ENCODE measurements at regions of chr11 and their contacts with region 1.

Region 1: GRCh38 chr11:65497141-65498041 is 1.5 kb upstream of the MALAT1 start:
- DNase-seq: peak; percentile 98
- H3K4me3 ChIP-seq: peak overlapping the region; percentile 47 to 99 (median 75)
- H3K27ac ChIP-seq: peak overlapping the region; percentile 98
- H3K4me1 ChIP-seq: peaks cover 48% of the 10 kb centered on the region
- H3K27me3 ChIP-seq: no peaks in the 10 kb centered on the region
- CTCF ChIP-seq: no peak

Region 2: DNA sequence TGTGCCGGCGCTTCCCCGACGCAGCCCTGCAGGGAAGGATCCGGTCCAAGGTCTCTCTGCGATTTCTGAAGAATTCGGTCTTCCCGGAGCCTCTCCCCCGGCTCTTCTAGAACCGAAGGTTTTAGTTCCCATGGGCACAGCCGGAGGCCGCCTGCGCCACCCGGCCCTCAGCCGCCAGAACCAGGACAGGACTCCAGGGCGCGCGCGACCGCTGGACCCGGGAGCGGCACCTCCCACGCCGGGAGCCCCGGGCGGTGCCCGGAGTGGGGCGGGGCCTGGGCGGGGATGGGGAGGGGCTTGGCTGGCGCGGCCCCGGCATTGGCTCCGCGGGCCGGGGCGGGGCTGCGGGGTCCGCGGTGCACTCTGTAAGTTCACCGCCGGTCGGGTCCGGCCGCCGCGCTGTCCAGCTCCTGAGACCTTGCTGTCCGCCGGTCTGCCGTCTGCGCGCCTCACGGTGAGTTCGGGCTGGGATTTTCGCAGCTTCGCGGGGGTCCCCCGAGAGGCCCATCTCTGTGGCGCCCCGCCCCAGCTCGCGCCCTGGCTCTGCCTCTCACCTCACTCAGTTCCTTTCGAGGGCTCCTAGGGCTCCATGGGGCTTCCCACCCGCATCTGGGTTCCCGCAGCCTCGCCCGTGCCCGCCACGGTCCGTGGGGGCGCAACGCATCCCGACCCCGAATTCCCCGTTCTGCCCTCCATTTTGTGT is 182.7 kb before region 1 on chr11 and contains the start of gene CDC42EP2:
- CTCF ChIA-PET with region 1: no interaction called
- dilution Hi-C with region 1: no loop called
- in situ Hi-C with region 1: no loop called
- intact Hi-C with region 1: no loop called
- DNase-seq: peak; percentile 82
- H3K4me3 ChIP-seq: peak within 1 kb of the TSS; percentile 77 to 91 (median 88)
- H3K27ac ChIP-seq: peak within 1 kb of the TSS; percentile 46
- H3K4me1 ChIP-seq: peaks cover 13% of the 10 kb centered on the region
- H3K27me3 ChIP-seq: no peaks in the 10 kb centered on the region
- CTCF ChIP-seq: no peak
- total RNA-seq, gene CDC42EP2: 6.8 to 24.8 TPM

Region 3: DNA sequence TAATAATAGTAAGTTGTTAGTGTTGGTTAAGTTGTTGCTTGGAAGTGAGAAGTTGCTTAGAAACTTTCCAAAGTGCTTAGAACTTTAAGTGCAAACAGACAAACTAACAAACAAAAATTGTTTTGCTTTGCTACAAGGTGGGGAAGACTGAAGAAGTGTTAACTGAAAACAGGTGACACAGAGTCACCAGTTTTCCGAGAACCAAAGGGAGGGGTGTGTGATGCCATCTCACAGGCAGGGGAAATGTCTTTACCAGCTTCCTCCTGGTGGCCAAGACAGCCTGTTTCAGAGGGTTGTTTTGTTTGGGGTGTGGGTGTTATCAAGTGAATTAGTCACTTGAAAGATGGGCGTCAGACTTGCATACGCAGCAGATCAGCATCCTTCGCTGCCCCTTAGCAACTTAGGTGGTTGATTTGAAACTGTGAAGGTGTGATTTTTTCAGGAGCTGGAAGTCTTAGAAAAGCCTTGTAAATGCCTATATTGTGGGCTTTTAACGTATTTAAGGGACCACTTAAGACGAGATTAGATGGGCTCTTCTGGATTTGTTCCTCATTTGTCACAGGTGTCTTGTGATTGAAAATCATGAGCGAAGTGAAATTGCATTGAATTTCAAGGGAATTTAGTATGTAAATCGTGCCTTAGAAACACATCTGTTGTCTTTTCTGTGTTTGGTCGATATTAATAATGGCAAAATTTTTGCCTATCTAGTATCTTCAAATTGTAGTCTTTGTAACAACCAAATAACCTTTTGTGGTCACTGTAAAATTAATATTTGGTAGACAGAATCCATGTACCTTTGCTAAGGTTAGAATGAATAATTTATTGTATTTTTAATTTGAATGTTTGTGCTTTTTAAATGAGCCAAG is 72.1 kb before region 1 on chr11:
- CTCF ChIA-PET with region 1: interaction called, 6 read pairs
- dilution Hi-C with region 1: loop called (anchors 5 kb)
- in situ Hi-C with region 1: loop called (anchors 5 kb)
- intact Hi-C with region 1: no loop called
- DNase-seq: peak; percentile 80
- H3K4me3 ChIP-seq: peak overlapping the region; percentile 63 to 89 (median 87)
- H3K27ac ChIP-seq: peak overlapping the region; percentile 100
- H3K4me1 ChIP-seq: peaks cover 28% of the 10 kb centered on the region
- H3K27me3 ChIP-seq: no peaks in the 10 kb centered on the region
- CTCF ChIP-seq: peak; percentile 6 to 21

Region 4: GRCh38 chr11:65477149-65477965 is 20.0 kb before region 1 on chr11:
- CTCF ChIA-PET with region 1: interaction called, 5 read pairs
- dilution Hi-C with region 1: no loop called
- in situ Hi-C with region 1: no loop called
- intact Hi-C with region 1: loop called (anchors 1 kb)
- DNase-seq: peak; percentile 95
- H3K4me3 ChIP-seq: peak overlapping the region; percentile 54 to 76 (median 62)
- H3K27ac ChIP-seq: peak overlapping the region; percentile 95
- H3K4me1 ChIP-seq: peaks cover 56% of the 10 kb centered on the region
- H3K27me3 ChIP-seq: no peaks in the 10 kb centered on the region
- CTCF ChIP-seq: peak in 1 of 2 donors; percentile 5

Measured in mammary epithelial cell (primary cell).